Activated CD4-positive, alpha-beta memory T cell treated with anti-CD3 and anti-CD28 coated beads for 36 hours (primary cell): ENCODE measurements at regions of chrX and their contacts with region 1.

Region 1: GRCh38 chrX:21926527-21927278 is 13.8 kb upstream of the SMS start:
- DNase-seq: no peak
- H3K4me3 Mint-ChIP-seq: no peak overlapping the region
- H3K27ac Mint-ChIP-seq: peak overlapping the region; percentile 62
- H3K4me1 Mint-ChIP-seq: peaks cover 32% of the 10 kb centered on the region
- H3K27me3 Mint-ChIP-seq: no peaks in the 10 kb centered on the region

Region 2: GRCh38 chrX:21940356-21940829 is 13.7 kb after region 1 on chrX and contains the start of gene SMS:
- CTCF ChIA-PET with region 1: no interaction called
- POLR2A ChIA-PET with region 1: interaction called, 5 read pairs
- intact Hi-C with region 1: loop called (anchors 2 kb)
- DNase-seq: peak; percentile 72
- H3K4me3 Mint-ChIP-seq: peak within 1 kb of the TSS; percentile 84
- H3K27ac Mint-ChIP-seq: peak within 1 kb of the TSS; percentile 88
- H3K4me1 Mint-ChIP-seq: peaks cover 25% of the 10 kb centered on the region
- H3K27me3 Mint-ChIP-seq: no peaks in the 10 kb centered on the region
- total RNA-seq, gene SMS: 119 to 120 TPM

Region 3: DNA sequence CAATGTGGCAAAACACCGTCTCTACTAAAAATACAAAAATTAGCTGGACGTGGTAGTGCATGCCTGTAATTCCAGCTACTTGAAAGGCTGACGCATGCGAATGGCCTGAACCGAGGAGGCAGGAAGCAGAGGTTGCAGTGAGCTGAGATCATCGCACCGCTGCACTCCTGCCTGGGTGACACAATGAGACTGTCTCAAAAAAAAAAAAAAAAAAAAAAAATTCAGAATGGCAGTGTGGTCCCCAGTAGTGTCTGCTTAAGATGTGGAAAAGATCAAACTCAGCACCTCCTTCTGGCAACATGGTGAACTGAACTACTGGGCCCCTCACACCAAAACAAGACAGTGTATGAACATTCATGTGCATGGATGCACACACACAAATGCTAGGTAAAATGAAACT is 46.0 kb after region 1 on chrX:
- CTCF ChIA-PET with region 1: no interaction called
- POLR2A ChIA-PET with region 1: no interaction called
- intact Hi-C with region 1: loop called (anchors 5 kb)
- DNase-seq: peak; percentile 64
- H3K4me3 Mint-ChIP-seq: no peak overlapping the region
- H3K27ac Mint-ChIP-seq: peak overlapping the region; percentile 87
- H3K4me1 Mint-ChIP-seq: peaks cover 35% of the 10 kb centered on the region
- H3K27me3 Mint-ChIP-seq: no peaks in the 10 kb centered on the region